ENCODE measurements at regions of chr22 and their contacts with region 1.

Region 1: GRCh38 chr22:46309526-46310085 is 12.9 kb downstream of the GTSE1 start:
- DNase-seq: peak; percentile 59
- H3K4me3 ChIP-seq: no peak overlapping the region
- H3K27ac ChIP-seq: peak overlapping the region; percentile 57
- H3K4me1 ChIP-seq: peaks cover 14% of the 10 kb centered on the region
- H3K27me3 ChIP-seq: no peaks in the 10 kb centered on the region
- CTCF ChIP-seq: no peak

Region 2: DNA sequence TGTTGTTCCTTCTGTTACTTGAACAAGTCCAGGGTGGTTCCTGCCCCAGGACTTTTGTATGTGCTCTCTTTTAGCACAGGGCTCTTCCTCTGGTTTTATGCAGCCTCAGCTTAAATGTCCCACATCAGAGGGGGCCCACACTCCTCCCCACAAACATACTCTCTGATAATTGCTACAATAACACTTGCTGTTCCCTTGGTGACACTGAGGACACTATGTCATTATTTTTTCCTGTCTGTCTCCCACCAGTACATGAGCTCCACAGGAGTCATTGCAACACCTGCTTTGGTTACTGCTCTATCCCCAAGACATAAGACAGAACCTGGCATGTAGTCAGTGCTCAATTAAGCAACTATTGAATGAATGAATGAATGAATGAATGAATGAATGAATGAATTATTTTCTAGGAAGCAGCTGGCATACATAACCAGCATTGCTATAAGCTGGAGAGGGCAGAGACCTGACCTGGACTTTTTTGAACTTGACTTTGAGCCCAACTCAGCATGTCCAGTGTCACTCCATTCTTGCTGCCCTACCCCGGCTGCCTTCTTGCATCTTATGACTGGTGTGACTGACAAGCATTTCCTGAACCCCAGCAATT is 325.2 kb before region 1 on chr22:
- intact Hi-C with region 1: loop called (anchors 10 kb)
- DNase-seq: no peak
- H3K4me3 ChIP-seq: no peak overlapping the region
- H3K27ac ChIP-seq: no peak overlapping the region
- H3K4me1 ChIP-seq: no peaks in the 10 kb centered on the region
- H3K27me3 ChIP-seq: no peaks in the 10 kb centered on the region
- CTCF ChIP-seq: no peak

Region 3: DNA sequence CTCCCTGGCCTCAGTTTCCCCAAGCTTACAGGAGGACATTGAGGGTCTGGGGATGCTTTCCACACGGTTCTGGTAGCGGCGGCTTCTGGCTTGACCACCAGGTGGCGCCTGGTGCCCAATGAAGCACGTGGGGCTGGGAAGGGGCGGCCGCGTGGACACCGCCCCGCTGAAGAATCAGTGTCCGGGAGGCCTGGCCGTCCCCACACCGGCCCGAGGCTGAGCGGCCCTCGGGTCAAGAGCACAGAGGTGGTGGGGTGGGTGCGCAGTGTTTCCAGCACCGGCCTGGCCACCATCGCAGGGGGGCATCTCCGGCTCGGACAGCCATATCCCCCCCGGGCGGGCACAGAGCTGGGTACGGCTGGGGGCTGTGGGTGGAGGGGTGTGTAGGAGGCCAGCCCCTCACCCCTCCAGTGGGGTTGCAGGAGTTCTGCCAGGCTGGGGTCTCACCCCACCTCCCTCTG is 187.1 kb before region 1 on chr22:
- intact Hi-C with region 1: loop called (anchors 5 kb)
- DNase-seq: peak; percentile 75
- H3K4me3 ChIP-seq: peak overlapping the region; percentile 41
- H3K27ac ChIP-seq: no peak overlapping the region
- H3K4me1 ChIP-seq: peaks cover 18% of the 10 kb centered on the region
- H3K27me3 ChIP-seq: no peaks in the 10 kb centered on the region
- CTCF ChIP-seq: peak; percentile 95

Region 4: DNA sequence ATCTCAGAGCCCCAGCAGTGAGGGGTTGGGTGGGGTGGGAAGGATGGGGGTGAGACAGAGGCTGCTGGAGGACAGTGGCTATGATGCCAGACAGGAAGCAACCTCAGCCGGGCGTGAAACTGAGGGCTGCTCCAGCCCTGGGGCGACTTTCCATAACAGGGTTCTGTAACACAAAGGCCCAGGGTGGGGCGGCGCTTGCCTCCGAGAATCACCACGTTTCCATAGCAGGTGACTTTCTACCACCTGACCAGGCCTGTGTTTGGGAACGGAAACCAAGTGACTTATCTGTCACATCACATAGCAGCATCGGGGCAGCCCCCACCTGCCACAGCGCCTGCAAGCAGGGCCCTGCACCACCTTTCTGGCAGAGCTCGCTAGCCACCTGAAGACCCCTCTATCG is 111.7 kb after region 1 on chr22:
- intact Hi-C with region 1: no loop called
- DNase-seq: no peak
- H3K4me3 ChIP-seq: no peak overlapping the region
- H3K27ac ChIP-seq: no peak overlapping the region
- H3K4me1 ChIP-seq: peaks cover 29% of the 10 kb centered on the region
- H3K27me3 ChIP-seq: peaks cover 11% of the 10 kb centered on the region
- CTCF ChIP-seq: no peak

Measured in left ventricle myocardium inferior (tissue), 1 donor.